Posterior cingulate gyrus (tissue), 11 donors: ENCODE measurements at regions of chr4 and their contacts with region 1.

Region 1: GRCh38 chr4:65139998-65140397 is 530.3 kb downstream of the EPHA5 start:
- DNase-seq: no peak

Region 2: DNA sequence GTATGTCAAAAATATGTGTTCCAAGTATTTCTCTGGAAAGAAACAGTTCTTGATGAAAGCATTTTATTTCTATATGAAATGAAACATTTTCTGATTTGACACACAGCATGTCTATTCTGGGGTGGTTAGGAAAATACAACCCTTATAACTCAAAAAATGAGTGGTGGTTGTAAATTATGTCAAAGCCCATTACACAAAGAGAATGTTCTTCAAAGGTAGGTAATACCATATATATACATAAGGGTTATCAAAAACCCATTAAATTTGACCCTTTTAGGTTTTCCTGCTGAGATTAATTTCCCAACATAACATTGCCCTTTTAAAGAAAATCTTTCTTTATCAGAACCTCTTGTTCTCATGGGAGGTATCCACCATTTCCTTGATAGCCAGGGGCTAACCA is 310.2 kb before region 1 on chr4:
- intact Hi-C with region 1: no loop called
- DNase-seq: no peak

Region 3: GRCh38 chr4:65089666-65090065 is 50.3 kb before region 1 on chr4:
- intact Hi-C with region 1: loop called (anchors 10 kb)
- DNase-seq: no peak